Adrenal gland (tissue), 19 donors: ENCODE measurements at regions of chr1 and their contacts with region 1.

Region 1: DNA sequence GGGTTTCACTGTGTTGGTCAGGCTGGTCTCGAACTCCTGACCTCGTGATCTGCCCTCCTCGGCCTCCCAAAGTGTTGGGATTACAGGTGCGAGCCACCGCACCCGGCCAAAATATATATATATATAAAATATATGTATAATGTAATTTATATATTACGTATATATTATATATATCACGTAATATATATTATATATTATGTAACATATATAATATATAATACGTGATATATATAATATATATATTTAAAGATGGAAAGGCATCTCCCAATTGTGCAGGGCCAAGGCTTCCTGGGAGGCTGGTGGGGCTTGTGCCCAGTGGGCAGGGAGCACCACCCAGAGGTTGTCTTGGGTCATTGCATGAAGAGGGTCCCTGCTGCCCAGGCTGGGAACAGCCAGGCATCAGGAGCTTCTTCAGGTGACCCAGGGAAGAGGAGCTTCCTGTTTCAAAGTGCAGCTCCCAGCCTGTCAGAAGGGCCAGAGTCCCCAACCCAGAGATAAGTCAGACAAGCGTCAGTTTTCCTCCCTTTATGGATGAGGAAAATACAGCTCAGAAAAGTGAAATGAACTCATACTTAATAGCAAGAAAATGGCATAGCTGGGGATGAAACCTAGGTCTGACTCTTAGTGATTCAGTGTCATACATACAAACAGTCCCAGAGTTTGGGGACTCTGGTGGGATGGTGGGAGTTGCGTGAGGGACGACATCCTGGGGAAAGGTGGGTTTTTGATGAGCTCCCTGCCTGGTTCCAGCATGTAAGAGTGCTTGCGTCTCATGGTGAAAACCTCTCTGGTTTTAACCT is 12.0 kb downstream of the UBE2Q1 start:
- DNase-seq: peak; percentile 63 to 82 (median 73)
- H3K4me3 ChIP-seq: no peak overlapping the region
- H3K27ac ChIP-seq: peak overlapping the region in 1 of 5 donors; percentile 50
- H3K4me1 ChIP-seq: peaks cover 8 to 19% of the 10 kb centered on the region in 2 donors
- H3K27me3 ChIP-seq: no peaks in the 10 kb centered on the region
- CTCF ChIP-seq: peak; percentile 77 to 87 (median 82)
- POLR2A ChIP-seq: no peak

Region 2: GRCh38 chr1:154485106-154485505 is 61.4 kb before region 1 on chr1:
- intact Hi-C with region 1: loop called (anchors 2 to 5 kb)
- DNase-seq: peak in 6 of 7 donors; percentile 41 to 81 (median 54)
- H3K4me3 ChIP-seq: no peak overlapping the region
- H3K27ac ChIP-seq: peak overlapping the region in 2 of 5 donors; percentile 58 to 72
- H3K4me1 ChIP-seq: peaks cover 0 to 10% of the 10 kb centered on the region in 2 donors
- H3K27me3 ChIP-seq: no peaks in the 10 kb centered on the region
- CTCF ChIP-seq: no peak
- POLR2A ChIP-seq: no peak